Breast epithelium (tissue), 4 donors: ENCODE measurements at regions of chr22 and their contacts with region 1.

Region 1: DNA sequence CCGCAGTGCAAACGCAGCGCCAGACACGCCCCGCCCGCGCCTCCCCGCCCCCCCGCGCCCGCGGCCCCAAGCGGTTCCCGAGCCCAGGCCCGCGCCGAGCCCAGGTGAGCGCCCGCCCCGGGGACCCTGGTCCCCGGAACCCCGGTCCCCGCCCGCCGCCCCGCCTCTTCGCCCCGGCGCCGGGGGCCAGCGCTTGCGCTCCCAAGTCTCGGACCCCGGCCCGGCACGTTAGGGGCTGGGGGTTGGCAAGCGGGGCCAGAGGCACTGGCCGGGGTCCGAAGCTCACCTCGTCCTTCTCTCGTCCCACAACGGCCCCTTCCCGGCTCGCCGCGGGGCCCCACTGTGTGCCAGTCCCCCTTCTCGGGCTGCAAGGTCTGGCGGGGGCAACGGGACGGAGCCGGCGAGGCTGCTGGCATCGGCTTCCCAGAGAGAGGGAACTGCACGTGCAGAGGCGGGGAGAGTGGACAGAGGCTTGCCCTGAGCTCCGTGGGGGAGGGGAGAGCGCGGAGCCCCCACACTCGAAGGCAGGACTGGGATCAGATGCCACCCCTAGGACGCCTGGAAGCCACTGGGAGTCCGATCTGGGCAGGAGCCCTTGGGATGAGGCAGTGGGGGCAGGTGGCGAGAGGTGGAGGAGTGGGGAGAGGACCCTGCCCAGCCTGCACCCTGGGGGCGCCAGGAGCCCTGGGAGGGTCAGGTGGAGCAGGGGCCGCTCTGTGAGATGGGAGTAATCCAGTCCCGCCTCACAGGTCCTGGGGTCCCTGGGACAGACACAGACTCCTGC is 1.8 kb upstream of the AIFM3 start:
- DNase-seq: no peak
- H3K4me3 ChIP-seq: peak overlapping the region; percentile 24 to 68 (median 50)
- H3K27ac ChIP-seq: no peak overlapping the region
- H3K4me1 ChIP-seq: peaks cover 0 to 12% of the 10 kb centered on the region in 2 donors
- H3K27me3 ChIP-seq: no peaks in the 10 kb centered on the region
- CTCF ChIP-seq: no peak
- POLR2A ChIP-seq: no peak

Region 2: GRCh38 chr22:20061481-20061861 is 903.8 kb before region 1 on chr22:
- intact Hi-C with region 1: loop called (anchors 5 kb)
- DNase-seq: no peak
- H3K4me3 ChIP-seq: no peak overlapping the region
- H3K27ac ChIP-seq: no peak overlapping the region
- H3K4me1 ChIP-seq: no peaks in the 10 kb centered on the region
- H3K27me3 ChIP-seq: no peaks in the 10 kb centered on the region
- CTCF ChIP-seq: no peak
- POLR2A ChIP-seq: no peak

Region 3: DNA sequence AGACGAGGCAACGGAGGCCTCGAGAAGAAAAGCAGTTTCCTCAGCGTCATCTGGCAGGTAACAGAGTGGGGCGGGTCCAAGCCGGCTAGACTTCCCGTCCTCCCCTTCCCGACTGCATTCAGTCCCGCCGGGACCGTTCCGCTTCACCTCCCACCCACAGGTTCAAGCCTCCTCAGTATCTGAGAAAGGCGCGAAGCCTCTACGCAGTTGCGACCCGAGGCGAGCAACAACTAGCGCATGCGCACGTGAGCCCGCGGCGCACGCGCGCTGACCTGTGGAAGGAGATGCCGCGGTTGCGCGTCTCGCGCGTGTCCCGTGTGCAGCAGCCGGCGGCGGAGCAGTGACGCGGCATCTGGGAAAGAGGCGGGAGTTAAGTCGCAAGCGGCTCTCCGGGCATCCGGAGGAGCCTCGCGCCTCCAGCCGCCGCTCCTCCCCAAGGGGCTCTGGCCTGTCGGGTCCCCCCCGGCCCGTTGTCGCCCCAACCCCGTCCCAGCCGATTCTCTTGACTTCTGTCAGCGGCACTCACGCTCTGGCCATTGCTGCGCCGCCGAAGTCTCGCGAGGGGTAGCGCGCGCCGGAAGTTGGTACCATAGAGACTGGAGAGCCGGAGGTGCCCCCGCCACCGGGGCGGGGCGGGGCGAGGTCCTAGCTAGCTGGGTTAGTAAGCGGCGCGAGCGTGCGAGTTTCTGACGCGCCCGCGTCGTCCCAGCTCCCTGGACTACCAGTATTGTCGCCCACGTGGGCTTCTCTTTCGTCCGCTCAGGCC is 36.4 kb after region 1 on chr22 and contains the start of gene THAP7:
- intact Hi-C with region 1: no loop called
- DNase-seq: peak; percentile 95 to 96
- H3K4me3 ChIP-seq: peak within 1 kb of the TSS; percentile 72 to 85 (median 74)
- H3K27ac ChIP-seq: peak within 1 kb of the TSS; percentile 99 to 100
- H3K4me1 ChIP-seq: peaks cover 4 to 22% of the 10 kb centered on the region in 2 donors
- H3K27me3 ChIP-seq: no peaks in the 10 kb centered on the region
- CTCF ChIP-seq: peak in 1 of 3 donors; percentile 18
- POLR2A ChIP-seq: peak; percentile 89
- total RNA-seq, gene THAP7: 35.8 to 59.9 (median 52.4) TPM

Region 4: GRCh38 chr22:21098099-21098671 is 132.9 kb after region 1 on chr22:
- intact Hi-C with region 1: no loop called
- DNase-seq: no peak
- H3K4me3 ChIP-seq: no peak overlapping the region
- H3K27ac ChIP-seq: no peak overlapping the region
- H3K4me1 ChIP-seq: peaks cover 0 to 4% of the 10 kb centered on the region in 2 donors
- H3K27me3 ChIP-seq: no peaks in the 10 kb centered on the region
- CTCF ChIP-seq: no peak
- POLR2A ChIP-seq: no peak